ENCODE measurements at regions of chr20 and their contacts with region 1.

Region 1: GRCh38 chr20:51487565-51488268 is 54.8 kb downstream of the NFATC2 start:
- DNase-seq: peak; percentile 99
- ATAC-seq: peak; percentile 99
- H3K4me3 ChIP-seq: peak overlapping the region; percentile 63
- H3K27ac ChIP-seq: peak overlapping the region; percentile 92
- H3K4me1 ChIP-seq: peaks cover 25% of the 10 kb centered on the region
- H3K27me3 ChIP-seq: no peaks in the 10 kb centered on the region
- CTCF ChIP-seq: no peak

Region 2: DNA sequence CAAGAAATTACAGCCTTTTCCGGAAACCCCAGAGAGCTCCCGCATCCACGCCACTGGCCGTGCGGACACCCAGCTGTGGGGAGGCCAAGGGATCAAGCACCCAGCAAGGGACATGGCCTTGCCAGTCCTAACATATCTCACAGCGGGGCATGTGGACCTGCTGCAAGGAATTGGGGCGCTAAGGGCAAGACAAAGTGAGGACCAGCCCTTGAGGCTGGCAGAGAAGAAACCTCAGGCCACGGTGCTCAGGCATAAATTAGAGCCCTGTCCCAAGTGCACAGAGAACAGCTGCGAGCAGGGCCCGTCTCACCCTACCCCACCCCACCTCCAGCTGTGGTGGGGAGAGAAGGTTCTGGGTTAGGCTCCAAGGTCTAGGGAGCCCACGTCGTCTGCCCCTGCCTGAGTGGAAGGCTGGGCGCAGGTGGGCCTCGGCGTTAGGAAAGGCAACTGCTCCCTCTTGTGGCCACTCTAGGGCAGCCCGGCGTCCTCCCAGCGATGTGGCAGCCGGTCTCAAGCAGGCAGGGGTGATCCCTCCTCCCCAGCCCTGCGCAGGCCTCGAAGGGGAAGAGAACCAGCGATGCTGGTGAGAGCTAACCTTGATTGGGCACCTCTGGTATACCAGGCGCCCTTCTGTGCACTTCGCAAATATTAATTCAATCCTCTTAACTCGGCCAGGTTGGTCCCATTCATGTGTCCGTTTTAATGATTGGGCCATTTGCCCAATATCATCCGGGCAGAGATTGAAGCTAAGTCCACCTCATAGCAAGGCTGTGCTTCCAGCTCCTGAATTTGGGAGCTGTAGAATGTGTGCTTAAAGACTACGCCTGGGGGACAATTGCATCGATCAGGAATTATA is 181.0 kb before region 1 on chr20:
- CTCF ChIA-PET with region 1: no interaction called
- POLR2A ChIA-PET with region 1: no interaction called
- intact Hi-C with region 1: no loop called
- DNase-seq: peak; percentile 92
- ATAC-seq: peak; percentile 100
- H3K4me3 ChIP-seq: peak overlapping the region; percentile 2; the same call in 1 of the 2 replicates
- H3K27ac ChIP-seq: no peak overlapping the region
- H3K4me1 ChIP-seq: peaks cover 19% of the 10 kb centered on the region
- H3K27me3 ChIP-seq: no peaks in the 10 kb centered on the region
- CTCF ChIP-seq: peak; percentile 100

Region 3: DNA sequence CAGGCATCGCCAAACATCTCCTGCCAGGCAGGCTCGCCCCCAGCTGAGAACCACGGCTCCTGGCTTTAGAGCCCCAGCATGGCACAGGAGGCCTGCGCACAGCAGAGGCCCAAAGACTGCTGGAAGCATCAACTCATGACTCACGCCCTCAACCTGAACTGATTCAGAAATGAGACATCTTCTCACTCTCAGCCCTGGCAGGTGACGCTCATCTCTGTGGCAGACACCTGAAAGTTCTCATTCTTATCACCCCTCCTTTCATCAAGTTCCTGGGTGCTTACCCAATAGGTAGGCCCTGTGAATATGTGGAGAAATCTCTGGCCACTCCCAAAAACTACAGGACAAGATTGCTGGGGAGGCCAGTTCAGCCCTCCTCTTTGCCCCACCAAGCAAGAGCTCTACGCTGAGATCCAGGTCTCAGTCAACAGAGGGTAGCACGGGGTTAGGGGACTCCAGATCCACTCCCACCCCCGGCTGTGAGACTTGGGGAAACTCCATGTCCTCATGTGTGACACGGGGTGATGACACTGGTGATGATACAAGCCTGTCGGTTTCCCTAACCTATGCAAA is 43.5 kb after region 1 on chr20:
- CTCF ChIA-PET with region 1: interaction called, 3 read pairs
- POLR2A ChIA-PET with region 1: no interaction called
- intact Hi-C with region 1: loop called (anchors 1 kb)
- DNase-seq: peak; percentile 98
- ATAC-seq: peak; percentile 71
- H3K4me3 ChIP-seq: no peak overlapping the region
- H3K27ac ChIP-seq: peak overlapping the region; percentile 78
- H3K4me1 ChIP-seq: peaks cover 37% of the 10 kb centered on the region
- H3K27me3 ChIP-seq: no peaks in the 10 kb centered on the region
- CTCF ChIP-seq: no peak

Region 4: DNA sequence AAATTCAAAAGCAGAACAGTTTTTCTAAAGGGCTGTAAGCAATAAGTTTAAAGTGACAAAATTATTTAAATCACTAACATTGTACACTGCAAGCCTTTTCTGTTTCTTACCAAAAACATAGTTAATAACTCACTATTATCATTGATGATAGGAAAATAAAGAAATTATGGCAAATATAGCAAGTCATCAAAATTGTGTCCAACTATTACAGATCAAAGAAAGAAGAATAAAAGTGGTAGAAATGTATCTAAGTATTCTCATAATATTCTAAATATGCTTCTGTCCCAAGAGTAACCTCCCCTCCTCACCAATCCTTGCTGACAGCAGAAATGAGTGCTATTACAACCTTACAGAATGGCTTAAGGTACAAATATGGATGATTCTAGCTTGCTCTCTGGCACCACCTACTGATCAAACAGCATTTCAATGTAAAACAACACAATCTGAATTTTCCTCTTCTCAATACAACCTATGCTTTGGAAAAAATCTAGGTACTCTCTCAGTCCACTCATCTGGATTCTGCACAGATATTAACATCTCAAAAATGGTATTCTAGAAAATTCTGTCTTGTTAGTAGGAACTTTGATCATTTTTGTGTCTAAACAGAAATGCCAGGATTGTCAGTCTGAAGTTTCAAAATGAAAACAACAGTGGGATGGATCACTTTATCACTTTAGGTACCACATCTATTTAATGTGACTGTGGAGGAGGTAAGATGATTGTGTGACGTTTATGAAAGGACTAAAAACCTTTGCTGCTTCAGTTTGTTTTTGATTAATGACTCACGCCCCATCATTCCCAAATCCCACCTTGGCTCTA is 662.9 kb after region 1 on chr20:
- CTCF ChIA-PET with region 1: no interaction called
- POLR2A ChIA-PET with region 1: no interaction called
- intact Hi-C with region 1: no loop called
- DNase-seq: peak; percentile 76
- ATAC-seq: peak; percentile 84
- H3K4me3 ChIP-seq: no peak overlapping the region
- H3K27ac ChIP-seq: no peak overlapping the region
- H3K4me1 ChIP-seq: no peaks in the 10 kb centered on the region
- H3K27me3 ChIP-seq: no peaks in the 10 kb centered on the region
- CTCF ChIP-seq: peak; percentile 99